ENCODE measurements at regions of chr2 and their contacts with region 1.

Region 1: DNA sequence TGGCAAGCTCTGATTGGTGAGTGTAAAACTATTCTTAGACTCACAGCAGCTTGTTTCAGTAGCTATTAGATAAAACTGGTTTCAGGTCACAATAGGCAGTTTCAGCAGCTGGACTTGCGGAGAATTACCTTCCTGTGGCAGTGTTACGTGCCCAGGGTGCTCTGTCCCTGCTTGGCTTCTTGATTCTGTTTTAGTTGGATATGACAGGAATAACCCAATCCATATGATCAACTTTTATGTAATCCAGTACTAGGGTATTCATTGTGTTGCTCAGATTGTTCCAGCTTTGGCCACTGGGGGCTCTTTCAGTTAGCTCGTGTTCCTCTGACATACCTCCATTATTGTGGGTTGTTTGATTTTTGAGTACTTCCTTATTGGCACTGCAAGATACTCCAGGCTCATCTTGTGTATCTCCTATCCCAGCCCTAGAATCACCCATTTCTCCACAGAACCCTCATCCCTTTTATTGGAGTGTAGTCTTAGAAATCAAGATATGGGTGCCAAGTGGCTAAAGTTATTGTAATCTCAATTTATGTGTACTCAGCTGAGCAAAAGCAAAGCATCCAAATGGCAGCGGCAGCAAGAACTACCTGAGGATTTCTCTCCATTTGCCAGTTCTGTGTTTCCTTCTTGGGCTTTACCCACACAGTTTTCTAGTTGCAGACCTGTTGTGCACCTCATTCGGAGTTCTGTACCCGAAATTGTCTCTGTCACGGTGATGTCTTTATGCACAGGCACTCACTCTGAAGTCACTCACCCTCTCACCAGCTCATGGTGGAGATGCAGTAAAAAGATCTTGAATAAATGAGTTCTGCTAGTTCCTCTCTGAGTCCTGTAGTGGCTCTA is 43.4 kb downstream of the INPP4A start:
- DNase-seq: no peak
- ATAC-seq: peak in 2 of 8 donors; percentile 39 to 41
- H3K4me3 ChIP-seq: no peak overlapping the region
- H3K27ac ChIP-seq: peak overlapping the region in 3 of 10 donors; percentile 14 to 62 (median 52)
- H3K4me1 ChIP-seq: peaks cover 6 to 94% (median 78%) of the 10 kb centered on the region in 9 donors
- H3K27me3 ChIP-seq: no peaks in the 10 kb centered on the region
- CTCF ChIP-seq: peak in 7 of 9 donors; percentile 17 to 60 (median 42)

Region 2: GRCh38 chr2:97812931-97813330 is 675.1 kb before region 1 on chr2:
- intact Hi-C with region 1: no loop called
- DNase-seq: no peak
- ATAC-seq: no peak
- H3K4me3 ChIP-seq: no peak overlapping the region
- H3K27ac ChIP-seq: no peak overlapping the region
- H3K4me1 ChIP-seq: peaks cover 0 to 3% (median 0%) of the 10 kb centered on the region in 9 donors
- H3K27me3 ChIP-seq: no peaks in the 10 kb centered on the region
- CTCF ChIP-seq: no peak

Region 3: GRCh38 chr2:98455494-98455976 is 32.5 kb before region 1 on chr2:
- intact Hi-C with region 1: loop called in 1 of 10 experiments (anchors 5 kb)
- DNase-seq: no peak
- ATAC-seq: peak in 7 of 8 donors; percentile 39 to 54 (median 46)
- H3K4me3 ChIP-seq: no peak overlapping the region
- H3K27ac ChIP-seq: peak overlapping the region in 3 of 10 donors; percentile 60 to 88 (median 62)
- H3K4me1 ChIP-seq: peaks cover 4 to 99% (median 52%) of the 10 kb centered on the region in 9 donors
- H3K27me3 ChIP-seq: no peaks in the 10 kb centered on the region
- CTCF ChIP-seq: no peak

Measured in heart right ventricle (tissue), 16 donors.